Naive thymus-derived CD4-positive, alpha-beta T cell (primary cell): ENCODE measurements at regions of chr12 and their contacts with region 1.

Region 1: DNA sequence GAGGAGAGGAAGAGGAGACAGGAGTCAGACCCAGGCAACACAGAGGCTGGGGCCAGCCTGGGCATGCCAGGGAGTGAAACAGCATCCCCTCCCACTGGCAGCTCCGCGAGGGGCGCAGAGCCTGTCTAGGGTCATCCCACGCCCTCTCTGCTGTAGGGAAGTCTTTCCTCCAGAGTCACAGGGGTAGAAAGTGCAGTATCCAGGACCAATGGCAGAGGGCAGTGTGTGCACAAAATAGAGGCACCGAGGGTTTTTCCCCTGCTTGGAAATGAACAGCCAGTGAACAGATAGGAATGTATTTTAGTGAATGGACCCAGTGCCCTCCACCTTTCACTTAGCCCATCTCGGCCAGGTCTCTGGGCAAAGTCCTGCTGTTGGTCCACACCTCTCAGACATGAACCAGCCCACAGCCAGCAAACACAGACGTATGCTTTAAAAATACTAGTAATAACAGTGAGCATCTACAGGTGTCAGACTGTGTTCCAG is 9.4 kb upstream of the KRT74 start:
- DNase-seq: peak; percentile 47 to 83 (median 76)
- ATAC-seq: peak; percentile 67
- H3K4me3 ChIP-seq: no peak overlapping the region
- H3K4me3 Mint-ChIP-seq: peak overlapping the region in 5 of 10 donors; percentile 9 to 50 (median 31)
- H3K27ac ChIP-seq: peak overlapping the region; percentile 20
- H3K27ac Mint-ChIP-seq: peak overlapping the region; percentile 21 to 97 (median 85)
- H3K4me1 ChIP-seq: peaks cover 0 to 60% of the 10 kb centered on the region in 2 donors
- H3K4me1 Mint-ChIP-seq: peaks cover 39 to 72% (median 64%) of the 10 kb centered on the region in 7 donors
- H3K27me3 ChIP-seq: no peaks in the 10 kb centered on the region
- H3K27me3 Mint-ChIP-seq: peaks cover 0 to 4% (median 0%) of the 10 kb centered on the region in 5 donors

Region 2: DNA sequence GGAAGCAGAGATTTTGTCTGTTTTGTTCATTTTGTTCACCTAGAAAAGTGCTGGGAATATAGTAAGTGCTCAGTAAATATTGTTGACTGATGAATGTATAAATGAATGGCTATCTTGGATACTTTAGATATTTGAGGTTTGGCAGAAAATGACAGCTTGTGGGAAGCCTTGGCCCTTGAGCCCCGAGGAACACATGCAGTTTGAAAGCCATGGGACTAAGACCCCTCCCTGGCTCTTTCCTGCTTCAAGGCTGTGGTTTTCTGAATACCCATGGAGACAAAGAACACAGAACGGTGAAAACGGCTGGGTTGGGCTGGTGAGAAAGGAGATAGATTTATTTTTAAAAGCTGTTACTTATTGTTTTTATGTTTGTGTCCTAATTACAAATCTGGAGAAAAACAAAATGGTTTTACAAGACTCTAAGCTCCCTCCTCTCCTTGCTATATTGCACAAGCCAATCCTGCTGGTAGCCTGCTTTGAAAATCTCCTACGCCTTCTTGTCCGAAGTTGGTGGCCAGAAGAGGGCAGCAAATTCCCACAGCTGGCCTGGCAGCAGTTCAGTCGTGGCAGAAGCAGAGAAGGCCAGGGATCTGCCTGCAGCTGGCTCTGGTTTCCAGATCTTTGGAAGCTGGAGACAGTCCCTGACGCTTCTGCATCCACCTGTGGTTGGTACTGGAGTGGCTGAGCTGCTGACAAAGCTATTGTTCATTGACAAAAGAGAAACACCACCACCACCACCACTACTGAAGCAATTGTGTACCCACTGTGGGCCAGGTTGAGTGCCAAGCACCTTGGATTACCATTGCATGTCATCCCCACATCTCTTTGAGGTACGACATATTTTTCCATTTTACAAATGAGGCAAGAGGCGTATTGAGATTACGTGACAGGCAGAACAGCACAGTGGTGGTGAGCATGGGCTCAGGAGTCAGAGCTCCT is 210.5 kb before region 1 on chr12:
- CTCF ChIA-PET with region 1: interaction called, 4 read pairs
- POLR2A ChIA-PET with region 1: no interaction called
- intact Hi-C with region 1: loop called in 1 of 2 experiments (anchors 1 kb)
- DNase-seq: peak in 7 of 9 donors; percentile 30 to 60 (median 42)
- ATAC-seq: peak; percentile 70
- H3K4me3 ChIP-seq: no peak overlapping the region
- H3K4me3 Mint-ChIP-seq: no peak overlapping the region
- H3K27ac ChIP-seq: no peak overlapping the region
- H3K27ac Mint-ChIP-seq: no peak overlapping the region
- H3K4me1 ChIP-seq: no peaks in the 10 kb centered on the region
- H3K4me1 Mint-ChIP-seq: no peaks in the 10 kb centered on the region
- H3K27me3 ChIP-seq: no peaks in the 10 kb centered on the region
- H3K27me3 Mint-ChIP-seq: peaks cover 2 to 31% (median 10%) of the 10 kb centered on the region in 5 donors

Region 3: GRCh38 chr12:52634266-52635056 is 51.4 kb after region 1 on chr12:
- CTCF ChIA-PET with region 1: interaction called, 32 read pairs
- POLR2A ChIA-PET with region 1: interaction called, 3 read pairs
- intact Hi-C with region 1: loop called (anchors 1 to 5 kb)
- DNase-seq: peak in 1 of 9 donors; percentile 16
- ATAC-seq: no peak
- H3K4me3 ChIP-seq: no peak overlapping the region
- H3K4me3 Mint-ChIP-seq: peak overlapping the region in 9 of 10 donors; percentile 36 to 95 (median 60)
- H3K27ac ChIP-seq: no peak overlapping the region
- H3K27ac Mint-ChIP-seq: peak overlapping the region; percentile 50 to 96 (median 90)
- H3K4me1 ChIP-seq: peaks cover 19 to 59% of the 10 kb centered on the region in 2 donors
- H3K4me1 Mint-ChIP-seq: peaks cover 44 to 88% (median 67%) of the 10 kb centered on the region in 7 donors
- H3K27me3 ChIP-seq: peaks cover 0 to 3% of the 10 kb centered on the region in 2 donors
- H3K27me3 Mint-ChIP-seq: peaks cover 0 to 16% (median 0%) of the 10 kb centered on the region in 5 donors

Region 4: DNA sequence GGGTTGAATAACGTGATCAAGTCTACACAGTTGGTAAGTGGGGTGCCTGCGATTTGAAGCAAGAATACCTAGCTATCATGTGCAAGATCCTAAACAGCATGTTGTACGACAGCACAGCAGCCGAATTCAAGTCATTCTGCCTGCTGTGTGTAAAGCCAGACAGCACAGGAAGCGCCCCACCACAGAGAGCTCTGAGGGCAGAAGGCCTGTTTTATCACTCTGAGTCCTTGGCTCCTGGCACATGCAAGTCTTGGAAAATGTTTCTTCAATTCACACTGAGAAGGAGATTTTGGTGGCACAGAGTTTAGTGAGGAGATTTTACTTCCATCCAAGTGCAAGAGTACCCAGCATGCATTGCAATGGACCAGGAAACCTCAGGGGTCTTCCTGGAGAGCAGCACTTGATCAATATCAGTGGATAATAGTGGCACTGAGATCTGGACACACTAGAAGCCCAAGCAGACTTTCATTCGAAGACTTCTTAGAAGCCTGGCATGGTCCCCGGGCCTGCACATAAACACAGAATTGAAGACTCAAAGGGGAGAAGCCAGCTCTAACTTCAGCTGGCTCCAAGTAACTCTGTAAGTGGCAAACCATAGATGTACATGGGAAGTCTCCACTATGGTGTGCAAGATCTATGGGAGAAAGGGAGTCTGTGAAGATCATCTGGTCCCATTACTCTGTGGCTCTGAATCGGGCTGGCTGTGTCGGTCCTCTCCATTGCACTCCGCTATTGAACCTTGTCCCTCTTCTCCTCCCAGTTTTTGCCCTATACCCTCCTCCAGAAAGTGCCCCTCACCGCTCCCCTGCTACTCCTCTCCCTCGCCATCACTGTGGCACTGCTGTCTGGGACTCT is 98.7 kb after region 1 on chr12:
- CTCF ChIA-PET with region 1: interaction called, 14 read pairs
- POLR2A ChIA-PET with region 1: interaction called, 7 read pairs
- intact Hi-C with region 1: loop called (anchors 1 to 5 kb)
- DNase-seq: peak in 7 of 9 donors; percentile 60 to 74 (median 67)
- ATAC-seq: peak; percentile 90
- H3K4me3 ChIP-seq: no peak overlapping the region
- H3K4me3 Mint-ChIP-seq: peak overlapping the region in 9 of 10 donors; percentile 2 to 76 (median 48)
- H3K27ac ChIP-seq: peak overlapping the region; percentile 42
- H3K27ac Mint-ChIP-seq: peak overlapping the region in 8 of 9 donors; percentile 78 to 93 (median 86)
- H3K4me1 ChIP-seq: peaks cover 6 to 24% of the 10 kb centered on the region in 2 donors
- H3K4me1 Mint-ChIP-seq: peaks cover 16 to 76% (median 66%) of the 10 kb centered on the region in 7 donors
- H3K27me3 ChIP-seq: peaks cover 0 to 4% of the 10 kb centered on the region in 2 donors
- H3K27me3 Mint-ChIP-seq: peaks cover 0 to 35% (median 0%) of the 10 kb centered on the region in 5 donors

Region 5: GRCh38 chr12:52713960-52714886 is 131.2 kb after region 1 on chr12:
- CTCF ChIA-PET with region 1: interaction called, 6 read pairs
- POLR2A ChIA-PET with region 1: interaction called, 3 read pairs
- intact Hi-C with region 1: loop called in 1 of 2 experiments (anchors 1 kb)
- DNase-seq: peak in 8 of 9 donors; percentile 16 to 49 (median 35)
- ATAC-seq: peak; percentile 58
- H3K4me3 ChIP-seq: peak overlapping the region; percentile 40
- H3K4me3 Mint-ChIP-seq: peak overlapping the region; percentile 65 to 91 (median 84)
- H3K27ac ChIP-seq: no peak overlapping the region
- H3K27ac Mint-ChIP-seq: peak overlapping the region in 7 of 9 donors; percentile 56 to 88 (median 77)
- H3K4me1 ChIP-seq: peaks cover 0 to 8% of the 10 kb centered on the region in 2 donors
- H3K4me1 Mint-ChIP-seq: peaks cover 7 to 49% (median 16%) of the 10 kb centered on the region in 7 donors
- H3K27me3 ChIP-seq: no peaks in the 10 kb centered on the region
- H3K27me3 Mint-ChIP-seq: peaks cover 0 to 56% (median 13%) of the 10 kb centered on the region in 5 donors

Region 6: GRCh38 chr12:52789637-52790426 is 206.8 kb after region 1 on chr12:
- CTCF ChIA-PET with region 1: interaction called, 3 read pairs
- POLR2A ChIA-PET with region 1: no interaction called
- intact Hi-C with region 1: loop called in 1 of 2 experiments (anchors 10 kb)
- DNase-seq: peak in 1 of 9 donors; percentile 5
- ATAC-seq: no peak
- H3K4me3 ChIP-seq: no peak overlapping the region
- H3K4me3 Mint-ChIP-seq: peak overlapping the region in 8 of 10 donors; percentile 5 to 65 (median 50)
- H3K27ac ChIP-seq: no peak overlapping the region
- H3K27ac Mint-ChIP-seq: peak overlapping the region in 2 of 9 donors; percentile 28 to 62
- H3K4me1 ChIP-seq: peaks cover 0 to 5% of the 10 kb centered on the region in 2 donors
- H3K4me1 Mint-ChIP-seq: peaks cover 8 to 36% (median 26%) of the 10 kb centered on the region in 7 donors
- H3K27me3 ChIP-seq: no peaks in the 10 kb centered on the region
- H3K27me3 Mint-ChIP-seq: peaks cover 20 to 54% (median 27%) of the 10 kb centered on the region in 5 donors

Region 7: DNA sequence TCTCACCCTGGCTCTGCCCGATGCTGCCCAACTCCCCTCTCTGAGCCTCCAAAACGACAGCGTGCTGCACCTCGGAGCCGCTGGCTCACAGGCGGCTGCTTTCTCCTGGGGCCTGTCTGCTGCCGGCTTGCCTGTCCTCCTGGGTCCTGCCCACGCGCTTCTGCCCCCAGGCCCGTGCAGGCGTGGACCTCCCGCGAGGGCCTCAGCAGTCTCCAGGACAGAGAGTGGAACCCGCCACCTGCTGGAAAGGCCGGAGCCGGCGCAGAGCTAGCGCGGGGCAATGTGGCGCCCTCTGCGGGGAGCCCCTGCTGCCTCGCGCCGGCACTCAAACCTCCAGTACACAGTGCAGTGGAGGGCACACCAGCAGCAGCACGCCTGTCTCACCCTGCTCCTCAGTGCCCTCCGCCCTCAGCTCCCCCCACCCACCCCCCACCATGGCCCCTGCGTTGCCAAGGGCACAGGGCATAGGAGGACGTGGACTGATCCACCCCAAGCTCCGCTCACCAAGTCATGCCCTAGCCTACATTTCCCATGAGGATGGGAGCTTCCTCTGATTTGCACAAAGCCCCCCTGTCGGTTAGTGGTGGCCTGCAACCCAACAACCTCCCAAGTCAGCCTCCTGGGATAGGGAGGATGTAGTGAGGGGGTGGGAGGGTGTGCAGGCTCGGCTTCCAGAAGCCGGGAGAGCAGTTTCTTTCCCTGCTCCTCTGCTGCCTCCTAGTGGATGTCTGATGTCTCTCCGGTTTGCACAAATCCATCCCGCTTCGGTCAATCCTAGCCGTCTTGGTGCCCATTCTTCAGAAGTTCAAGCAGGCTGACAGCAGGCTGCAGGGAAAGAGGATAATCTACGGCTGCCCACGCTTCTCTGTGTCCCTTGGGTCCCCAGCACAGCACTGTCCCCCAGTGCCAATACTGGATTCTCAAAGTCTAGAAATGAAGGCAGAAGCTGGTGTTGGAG is 296.7 kb after region 1 on chr12:
- CTCF ChIA-PET with region 1: interaction called, 731 read pairs
- POLR2A ChIA-PET with region 1: interaction called, 29 read pairs
- intact Hi-C with region 1: loop called (anchors 1 kb)
- DNase-seq: peak; percentile 67 to 84 (median 79)
- ATAC-seq: peak; percentile 99
- H3K4me3 ChIP-seq: peak overlapping the region; percentile 48
- H3K4me3 Mint-ChIP-seq: peak overlapping the region; percentile 51 to 85 (median 76)
- H3K27ac ChIP-seq: no peak overlapping the region
- H3K27ac Mint-ChIP-seq: peak overlapping the region in 6 of 9 donors; percentile 5 to 54 (median 32)
- H3K4me1 ChIP-seq: peaks cover 5 to 6% of the 10 kb centered on the region in 2 donors
- H3K4me1 Mint-ChIP-seq: peaks cover 3 to 13% (median 11%) of the 10 kb centered on the region in 7 donors
- H3K27me3 ChIP-seq: peaks cover 0 to 3% of the 10 kb centered on the region in 2 donors
- H3K27me3 Mint-ChIP-seq: peaks cover 0 to 21% (median 8%) of the 10 kb centered on the region in 5 donors